Activated T-helper 1 cell treated with anti-CD3 and anti-CD28 coated beads, Interleukin-12 subunit alpha, Interleukin-12 subunit beta, Interleukin-2, Interleukin-4 antibody, amounts not matched to agents 30 ng/mL and 10 ng/mL and 1 ng/mL, durations not matched to agents 14 hours and 24 hours and 36 hours (primary cell): ENCODE measurements at regions of chr1 and their contacts with region 1.

Region 1: DNA sequence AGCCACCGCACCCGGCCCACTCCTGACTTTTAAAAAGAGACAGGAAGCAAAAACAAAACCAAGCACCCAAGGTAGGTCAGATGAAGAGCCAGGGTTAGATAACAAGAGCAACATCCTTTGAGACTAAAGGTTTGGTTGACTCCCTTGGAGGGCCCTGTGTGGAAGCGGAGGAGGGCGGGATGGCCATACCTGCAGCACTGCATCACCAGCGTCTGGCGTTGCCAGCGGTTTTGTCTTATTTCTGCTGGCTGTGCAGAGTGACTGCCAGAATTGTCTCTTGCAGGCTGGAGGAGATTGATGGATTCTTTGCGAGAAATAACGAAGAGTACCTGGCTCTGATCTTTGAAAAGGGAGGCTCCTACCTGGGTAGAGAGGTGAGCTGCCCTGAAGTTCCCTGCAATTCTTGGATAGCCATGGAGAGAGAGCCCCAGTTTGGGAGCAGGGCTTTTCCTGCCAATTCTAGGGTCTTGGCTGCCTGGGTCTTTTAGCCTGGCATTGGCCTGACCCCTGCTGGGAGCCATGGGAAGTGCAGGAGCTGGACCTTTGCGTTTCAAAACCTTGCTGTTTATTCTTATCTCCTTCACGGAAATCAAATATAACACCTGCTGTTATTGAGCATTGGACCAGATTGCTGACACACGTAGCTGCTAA is 24.0 kb downstream of the QSOX1 start:
- DNase-seq: peak; percentile 24
- H3K4me3 Mint-ChIP-seq: no peak overlapping the region
- H3K27ac Mint-ChIP-seq: no peak overlapping the region
- H3K4me1 Mint-ChIP-seq: no peaks in the 10 kb centered on the region
- H3K27me3 Mint-ChIP-seq: no peaks in the 10 kb centered on the region

Region 2: DNA sequence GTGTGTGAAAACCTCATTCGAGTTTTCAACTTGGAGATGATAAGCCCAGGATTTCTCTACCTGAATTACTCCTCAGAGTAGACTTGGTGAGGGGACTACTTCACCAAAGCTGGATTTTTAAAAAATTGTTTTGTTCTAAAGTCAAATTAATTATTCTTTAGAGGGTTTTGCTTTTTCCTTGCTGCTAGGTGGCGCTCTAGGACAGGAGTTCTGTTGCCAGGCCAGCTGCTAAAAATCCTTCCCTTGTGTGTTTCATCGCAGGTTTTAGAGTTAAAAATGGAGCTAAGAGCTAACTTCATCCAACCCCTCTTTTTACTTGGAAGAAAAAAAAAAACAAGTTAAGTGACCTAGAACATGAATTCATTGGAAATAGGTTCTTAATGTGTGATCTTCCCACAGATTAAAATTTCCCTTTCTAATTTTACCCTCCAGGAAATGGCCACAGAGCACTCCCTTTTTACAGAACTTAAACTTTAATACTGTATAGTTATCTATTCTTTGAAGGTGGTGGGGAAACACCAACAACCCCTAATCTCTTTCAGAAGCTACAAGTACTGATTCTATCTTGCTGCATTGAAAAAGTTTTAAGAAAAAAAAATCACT is 472.2 kb before region 1 on chr1:
- intact Hi-C with region 1: loop called (anchors 1 kb)
- DNase-seq: peak; percentile 47
- H3K4me3 Mint-ChIP-seq: no peak overlapping the region
- H3K27ac Mint-ChIP-seq: no peak overlapping the region
- H3K4me1 Mint-ChIP-seq: peaks cover 25% of the 10 kb centered on the region
- H3K27me3 Mint-ChIP-seq: peaks cover 3% of the 10 kb centered on the region

Region 3: DNA sequence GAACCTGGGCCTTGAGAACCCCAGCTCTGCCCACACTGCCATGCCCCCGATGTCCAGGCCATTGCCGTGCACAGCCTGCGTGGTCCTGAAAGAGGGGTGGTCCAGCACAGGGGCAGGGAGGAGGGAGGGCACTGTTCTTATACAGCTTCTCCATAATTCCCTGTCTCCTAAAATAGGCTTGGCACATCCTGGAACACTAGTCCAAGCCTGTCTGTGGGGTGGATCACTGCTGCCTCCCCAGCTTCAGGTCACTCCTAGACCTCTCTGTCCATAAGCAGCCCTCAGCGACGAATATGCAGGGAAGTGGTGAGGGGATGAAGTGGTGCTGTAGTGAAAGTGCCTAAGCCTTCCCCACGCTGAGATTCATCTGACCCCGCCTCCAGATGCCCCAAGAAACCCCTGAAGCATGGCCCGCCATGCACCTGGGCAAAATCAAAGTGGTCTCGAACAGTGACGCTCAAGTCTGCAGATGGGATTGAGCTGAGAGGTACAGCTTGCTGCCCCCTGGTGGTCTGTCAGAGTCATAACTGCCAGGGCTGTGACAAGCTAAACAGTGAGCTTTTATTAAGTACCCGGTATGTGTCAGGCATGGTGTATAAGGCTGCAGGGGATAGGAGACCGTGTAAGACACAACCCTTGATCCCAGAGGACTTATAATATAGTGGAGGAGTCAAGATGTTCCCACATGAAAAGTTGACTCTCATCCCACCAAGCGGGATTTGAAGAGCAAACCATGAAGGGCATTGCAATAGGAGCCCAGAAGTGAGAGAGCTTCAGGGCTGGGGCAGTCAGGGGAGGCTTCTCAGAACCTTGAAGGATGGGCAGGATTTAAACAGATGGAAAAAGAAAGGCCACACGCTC is 368.9 kb before region 1 on chr1:
- intact Hi-C with region 1: loop called (anchors 1 kb)
- DNase-seq: peak; percentile 43
- H3K4me3 Mint-ChIP-seq: no peak overlapping the region
- H3K27ac Mint-ChIP-seq: no peak overlapping the region
- H3K4me1 Mint-ChIP-seq: peaks cover 11% of the 10 kb centered on the region
- H3K27me3 Mint-ChIP-seq: peaks cover 6% of the 10 kb centered on the region

Region 4: DNA sequence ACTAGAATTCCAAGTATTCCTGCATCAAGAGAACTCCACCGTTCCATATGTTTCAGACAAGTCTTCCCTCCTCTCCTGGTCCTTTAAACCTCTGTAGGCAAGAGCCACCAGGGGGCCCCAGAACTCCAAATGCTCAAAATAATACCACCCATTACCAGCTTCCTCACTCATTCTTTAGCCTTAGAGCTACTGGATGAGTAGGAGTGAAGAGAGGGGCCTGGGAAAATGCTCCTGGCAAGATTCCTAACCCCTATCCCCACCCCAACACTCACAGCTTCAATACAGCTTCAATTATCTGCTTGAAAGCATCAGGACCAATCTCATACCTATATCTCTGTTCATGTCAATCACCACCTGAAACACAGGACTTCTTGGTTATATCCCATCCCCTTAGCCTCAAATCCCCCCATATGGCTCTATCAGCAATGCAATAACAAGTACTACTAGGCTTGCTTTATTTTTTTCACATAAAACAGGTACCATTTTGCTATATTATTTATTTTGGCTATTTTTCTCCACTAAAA is 310.8 kb before region 1 on chr1:
- intact Hi-C with region 1: loop called (anchors 1 kb)
- DNase-seq: peak; percentile 14
- H3K4me3 Mint-ChIP-seq: no peak overlapping the region
- H3K27ac Mint-ChIP-seq: no peak overlapping the region
- H3K4me1 Mint-ChIP-seq: peaks cover 9% of the 10 kb centered on the region
- H3K27me3 Mint-ChIP-seq: no peaks in the 10 kb centered on the region

Region 5: DNA sequence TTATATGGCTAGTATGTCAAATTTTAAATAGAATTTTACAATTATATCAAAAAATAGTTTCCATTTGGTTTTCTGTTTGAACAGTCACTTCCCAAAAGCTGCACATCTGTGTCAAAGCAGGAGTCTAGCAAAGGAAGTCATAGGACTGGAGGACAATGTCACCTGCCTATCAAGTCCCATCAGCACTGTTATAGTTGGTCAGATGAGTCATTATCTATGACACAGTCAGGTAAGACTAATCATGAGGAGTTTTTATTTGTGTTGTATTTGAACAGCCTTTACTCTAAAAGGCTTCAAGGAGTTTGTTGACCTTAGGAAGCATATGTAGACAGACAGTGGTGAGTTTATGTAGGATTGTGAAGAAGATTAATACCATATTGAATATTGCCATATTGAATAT is 98.2 kb before region 1 on chr1:
- intact Hi-C with region 1: loop called (anchors 5 kb)
- DNase-seq: no peak
- H3K4me3 Mint-ChIP-seq: no peak overlapping the region
- H3K27ac Mint-ChIP-seq: no peak overlapping the region
- H3K4me1 Mint-ChIP-seq: no peaks in the 10 kb centered on the region
- H3K27me3 Mint-ChIP-seq: no peaks in the 10 kb centered on the region

Region 6: GRCh38 chr1:180112984-180113647 is 65.5 kb before region 1 on chr1:
- intact Hi-C with region 1: loop called (anchors 5 kb)
- DNase-seq: no peak
- H3K4me3 Mint-ChIP-seq: no peak overlapping the region
- H3K27ac Mint-ChIP-seq: no peak overlapping the region
- H3K4me1 Mint-ChIP-seq: no peaks in the 10 kb centered on the region
- H3K27me3 Mint-ChIP-seq: no peaks in the 10 kb centered on the region

Region 7: DNA sequence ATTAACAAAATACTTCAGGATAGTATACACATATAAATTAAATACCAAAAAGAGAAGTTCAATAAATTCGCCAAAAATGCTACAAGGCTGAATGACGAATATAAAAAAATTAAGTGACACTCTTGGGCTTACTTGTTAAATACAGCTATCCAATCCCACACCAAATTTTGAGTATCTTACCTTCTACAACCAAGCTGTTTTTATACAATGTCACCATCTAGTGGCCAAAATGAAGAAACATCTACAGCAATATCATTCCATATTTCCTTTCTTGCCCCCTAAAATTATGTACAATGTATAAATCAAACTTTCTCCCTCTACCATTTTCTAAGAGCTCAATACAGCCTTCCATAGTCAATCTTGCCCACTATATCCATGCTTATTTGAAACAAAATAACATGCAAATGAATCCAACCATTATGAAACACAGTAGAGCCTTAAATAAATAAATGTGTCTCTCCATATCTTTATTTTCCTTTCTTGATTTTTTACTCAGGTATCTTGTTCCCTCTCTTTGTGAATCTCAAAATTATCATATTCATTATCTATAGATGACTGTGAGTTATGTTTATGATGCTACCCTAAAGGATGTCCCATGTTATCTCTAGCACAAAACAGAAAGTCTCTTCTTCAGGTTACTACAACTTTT is 237.5 kb after region 1 on chr1:
- intact Hi-C with region 1: loop called (anchors 2 kb)
- DNase-seq: no peak
- H3K4me3 Mint-ChIP-seq: no peak overlapping the region
- H3K27ac Mint-ChIP-seq: no peak overlapping the region
- H3K4me1 Mint-ChIP-seq: no peaks in the 10 kb centered on the region
- H3K27me3 Mint-ChIP-seq: no peaks in the 10 kb centered on the region

Region 8: DNA sequence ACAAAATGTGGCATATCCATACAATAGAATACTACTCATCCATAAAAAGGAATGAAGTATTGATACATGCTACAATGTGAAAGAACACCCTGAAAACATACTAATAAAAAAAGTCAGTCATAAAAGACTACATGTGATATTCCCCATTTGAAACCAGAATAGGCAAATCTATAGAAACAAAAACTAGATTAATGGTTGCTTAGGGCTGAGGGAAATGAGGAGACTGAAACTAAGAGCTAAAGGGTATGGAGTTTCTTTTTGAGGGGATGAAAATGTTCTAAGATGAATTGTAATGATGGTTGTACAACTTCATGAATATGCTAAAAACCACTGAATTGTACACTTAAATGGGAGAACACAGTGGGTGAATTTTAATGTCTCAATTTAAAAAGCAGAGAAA is 272.9 kb after region 1 on chr1:
- intact Hi-C with region 1: no loop called
- DNase-seq: no peak
- H3K4me3 Mint-ChIP-seq: no peak overlapping the region
- H3K27ac Mint-ChIP-seq: no peak overlapping the region
- H3K4me1 Mint-ChIP-seq: peaks cover 11% of the 10 kb centered on the region
- H3K27me3 Mint-ChIP-seq: no peaks in the 10 kb centered on the region